Naive thymus-derived CD4-positive, alpha-beta T cell (primary cell): ENCODE measurements at regions of chr5 and their contacts with region 1.

Region 1: GRCh38 chr5:42994246-42995151 is 45.6 kb downstream of the ANXA2R start:
- DNase-seq: peak; percentile 73 to 89 (median 85)
- ATAC-seq: peak; percentile 73
- H3K4me3 ChIP-seq: peak overlapping the region; percentile 84
- H3K4me3 Mint-ChIP-seq: peak overlapping the region; percentile 84 to 100 (median 98)
- H3K27ac ChIP-seq: peak overlapping the region; percentile 89
- H3K27ac Mint-ChIP-seq: peak overlapping the region; percentile 97 to 100 (median 100)
- H3K4me1 ChIP-seq: peaks cover 18 to 21% of the 10 kb centered on the region in 2 donors
- H3K4me1 Mint-ChIP-seq: peaks cover 16 to 49% (median 29%) of the 10 kb centered on the region in 7 donors
- H3K27me3 ChIP-seq: no peaks in the 10 kb centered on the region
- H3K27me3 Mint-ChIP-seq: peaks cover 0 to under 1% (median 0%) of the 10 kb centered on the region in 5 donors

Region 2: GRCh38 chr5:42950440-42951292 is 43.8 kb before region 1 on chr5:
- CTCF ChIA-PET with region 1: interaction called, 19 read pairs
- POLR2A ChIA-PET with region 1: interaction called, 515 read pairs
- intact Hi-C with region 1: loop called (anchors 1 kb)
- DNase-seq: peak in 8 of 9 donors; percentile 39 to 77 (median 51)
- ATAC-seq: peak; percentile 51
- H3K4me3 ChIP-seq: peak overlapping the region; percentile 80
- H3K4me3 Mint-ChIP-seq: peak overlapping the region; percentile 87 to 99 (median 97)
- H3K27ac ChIP-seq: peak overlapping the region; percentile 98
- H3K27ac Mint-ChIP-seq: peak overlapping the region; percentile 97 to 100 (median 99)
- H3K4me1 ChIP-seq: peaks cover 5 to 22% of the 10 kb centered on the region in 2 donors
- H3K4me1 Mint-ChIP-seq: peaks cover 13 to 51% (median 23%) of the 10 kb centered on the region in 7 donors
- H3K27me3 ChIP-seq: no peaks in the 10 kb centered on the region
- H3K27me3 Mint-ChIP-seq: peaks cover 0 to 9% (median 0%) of the 10 kb centered on the region in 5 donors

Region 3: DNA sequence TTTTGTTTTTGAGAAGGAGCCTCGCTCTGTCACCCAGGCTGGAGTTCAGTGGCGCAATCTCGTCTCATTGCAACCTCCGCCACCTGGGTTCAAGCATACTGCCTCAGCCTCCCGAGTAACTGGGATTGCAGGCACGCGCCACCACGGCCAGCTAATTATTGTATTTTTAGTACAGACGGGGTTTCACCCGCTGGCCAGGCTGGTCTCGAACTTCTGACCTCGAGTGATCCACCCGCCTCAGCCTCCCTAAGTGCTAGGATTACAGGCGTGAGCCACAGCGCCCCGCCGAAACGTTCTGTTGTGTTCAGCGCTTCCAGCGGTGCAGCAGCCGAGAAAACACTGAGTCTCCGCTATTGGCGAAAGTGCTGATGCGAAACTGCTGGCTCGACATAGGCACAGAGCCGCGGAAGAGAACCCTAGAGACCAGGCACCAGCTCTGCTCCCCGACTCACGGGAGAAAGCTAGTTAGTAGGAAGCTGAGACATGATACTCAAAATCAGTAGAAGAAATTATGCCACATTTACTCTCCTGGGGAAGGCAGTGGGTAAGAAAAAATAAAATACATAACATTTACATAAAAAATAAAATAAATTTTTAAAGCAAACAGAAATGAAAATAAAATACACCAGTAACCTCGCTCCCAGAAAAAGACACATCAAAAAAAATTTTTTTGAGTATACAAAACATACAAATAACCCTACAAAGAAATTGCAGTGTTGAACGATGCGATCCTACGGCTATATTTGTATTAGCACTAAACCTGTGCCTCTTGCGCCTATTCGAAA is 14.1 kb after region 1 on chr5:
- CTCF ChIA-PET with region 1: interaction called, 70 read pairs
- POLR2A ChIA-PET with region 1: interaction called, 1,009 read pairs
- intact Hi-C with region 1: loop called (anchors 1 kb)
- DNase-seq: peak; percentile 79 to 95 (median 90)
- ATAC-seq: peak; percentile 78
- H3K4me3 ChIP-seq: peak overlapping the region; percentile 72
- H3K4me3 Mint-ChIP-seq: peak overlapping the region; percentile 85 to 98 (median 92)
- H3K27ac ChIP-seq: peak overlapping the region; percentile 92
- H3K27ac Mint-ChIP-seq: peak overlapping the region; percentile 96 to 100 (median 98)
- H3K4me1 ChIP-seq: peaks cover 22 to 24% of the 10 kb centered on the region in 2 donors
- H3K4me1 Mint-ChIP-seq: peaks cover 17 to 47% (median 29%) of the 10 kb centered on the region in 7 donors
- H3K27me3 ChIP-seq: no peaks in the 10 kb centered on the region
- H3K27me3 Mint-ChIP-seq: peaks cover 0 to 4% (median 0%) of the 10 kb centered on the region in 5 donors

Region 4: GRCh38 chr5:43040287-43041098 is 46.0 kb after region 1 on chr5 and contains the start of gene ANXA2R:
- CTCF ChIA-PET with region 1: interaction called, 85 read pairs
- POLR2A ChIA-PET with region 1: interaction called, 723 read pairs
- intact Hi-C with region 1: loop called (anchors 1 kb)
- DNase-seq: peak; percentile 76 to 98 (median 96)
- ATAC-seq: peak; percentile 72
- H3K4me3 ChIP-seq: peak within 1 kb of the TSS; percentile 73
- H3K4me3 Mint-ChIP-seq: peak within 1 kb of the TSS; percentile 82 to 99 (median 98)
- H3K27ac ChIP-seq: peak within 1 kb of the TSS; percentile 96
- H3K27ac Mint-ChIP-seq: peak within 1 kb of the TSS; percentile 93 to 100 (median 99)
- H3K4me1 ChIP-seq: peaks cover 17 to 31% of the 10 kb centered on the region in 2 donors
- H3K4me1 Mint-ChIP-seq: peaks cover 14 to 75% (median 45%) of the 10 kb centered on the region in 7 donors
- H3K27me3 ChIP-seq: no peaks in the 10 kb centered on the region
- H3K27me3 Mint-ChIP-seq: no peaks in the 10 kb centered on the region
- total RNA-seq, gene ANXA2R: 13.2 to 61.4 (median 42.0) TPM

Region 5: GRCh38 chr5:43105369-43106289 is 111.1 kb after region 1 on chr5:
- CTCF ChIA-PET with region 1: interaction called, 5 read pairs
- POLR2A ChIA-PET with region 1: interaction called, 19 read pairs
- intact Hi-C with region 1: loop called (anchors 1 to 2 kb)
- DNase-seq: peak; percentile 75 to 90 (median 85)
- ATAC-seq: peak; percentile 99
- H3K4me3 ChIP-seq: peak overlapping the region; percentile 66
- H3K4me3 Mint-ChIP-seq: peak overlapping the region; percentile 77 to 93 (median 89)
- H3K27ac ChIP-seq: peak overlapping the region; percentile 59
- H3K27ac Mint-ChIP-seq: peak overlapping the region; percentile 43 to 92 (median 88)
- H3K4me1 ChIP-seq: peaks cover 6 to 22% of the 10 kb centered on the region in 2 donors
- H3K4me1 Mint-ChIP-seq: peaks cover 21 to 49% (median 38%) of the 10 kb centered on the region in 7 donors
- H3K27me3 ChIP-seq: no peaks in the 10 kb centered on the region
- H3K27me3 Mint-ChIP-seq: no peaks in the 10 kb centered on the region

Region 6: DNA sequence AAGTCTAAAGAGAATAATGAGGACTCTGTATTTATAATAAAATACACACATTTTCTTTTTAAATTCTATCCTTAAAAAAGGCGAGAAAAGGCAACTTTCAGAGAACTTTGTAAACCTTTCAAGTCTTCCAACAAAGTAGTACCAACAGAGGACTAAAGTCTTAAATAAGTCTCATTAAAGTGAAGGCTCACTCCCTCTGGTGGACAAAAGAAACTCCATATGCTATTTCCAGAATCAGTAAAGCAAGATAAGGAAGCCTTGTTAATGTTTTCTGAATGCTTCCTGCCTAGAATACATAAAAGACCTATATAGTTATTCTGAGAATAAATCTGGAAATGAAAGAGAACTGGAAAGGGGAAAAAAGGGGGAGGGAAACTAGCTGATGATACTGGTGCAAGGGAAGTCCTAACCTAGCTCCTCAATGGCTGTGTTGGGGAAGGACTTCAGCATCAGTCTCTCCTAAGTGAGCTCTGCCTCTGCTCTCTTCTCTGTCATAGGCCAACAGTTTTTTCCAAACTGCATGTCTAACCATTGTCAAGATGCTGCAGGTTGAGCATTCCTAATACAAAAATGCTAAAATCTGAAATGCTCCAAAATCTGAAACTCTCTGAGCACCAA is 311.6 kb after region 1 on chr5:
- CTCF ChIA-PET with region 1: no interaction called
- POLR2A ChIA-PET with region 1: interaction called, 4 read pairs
- intact Hi-C with region 1: loop called in 1 of 2 experiments (anchors 2 kb)
- DNase-seq: peak in 7 of 9 donors; percentile 24 to 64 (median 50)
- ATAC-seq: peak; percentile 79
- H3K4me3 ChIP-seq: no peak overlapping the region
- H3K4me3 Mint-ChIP-seq: peak overlapping the region in 1 of 10 donors; percentile 18
- H3K27ac ChIP-seq: no peak overlapping the region
- H3K27ac Mint-ChIP-seq: peak overlapping the region in 6 of 9 donors; percentile 4 to 86 (median 30)
- H3K4me1 ChIP-seq: peaks cover 0 to 10% of the 10 kb centered on the region in 2 donors
- H3K4me1 Mint-ChIP-seq: peaks cover 21 to 82% (median 52%) of the 10 kb centered on the region in 7 donors
- H3K27me3 ChIP-seq: no peaks in the 10 kb centered on the region
- H3K27me3 Mint-ChIP-seq: no peaks in the 10 kb centered on the region